T-cell (primary cell): ENCODE measurements at regions of chr17 and their contacts with region 1.

Region 1: DNA sequence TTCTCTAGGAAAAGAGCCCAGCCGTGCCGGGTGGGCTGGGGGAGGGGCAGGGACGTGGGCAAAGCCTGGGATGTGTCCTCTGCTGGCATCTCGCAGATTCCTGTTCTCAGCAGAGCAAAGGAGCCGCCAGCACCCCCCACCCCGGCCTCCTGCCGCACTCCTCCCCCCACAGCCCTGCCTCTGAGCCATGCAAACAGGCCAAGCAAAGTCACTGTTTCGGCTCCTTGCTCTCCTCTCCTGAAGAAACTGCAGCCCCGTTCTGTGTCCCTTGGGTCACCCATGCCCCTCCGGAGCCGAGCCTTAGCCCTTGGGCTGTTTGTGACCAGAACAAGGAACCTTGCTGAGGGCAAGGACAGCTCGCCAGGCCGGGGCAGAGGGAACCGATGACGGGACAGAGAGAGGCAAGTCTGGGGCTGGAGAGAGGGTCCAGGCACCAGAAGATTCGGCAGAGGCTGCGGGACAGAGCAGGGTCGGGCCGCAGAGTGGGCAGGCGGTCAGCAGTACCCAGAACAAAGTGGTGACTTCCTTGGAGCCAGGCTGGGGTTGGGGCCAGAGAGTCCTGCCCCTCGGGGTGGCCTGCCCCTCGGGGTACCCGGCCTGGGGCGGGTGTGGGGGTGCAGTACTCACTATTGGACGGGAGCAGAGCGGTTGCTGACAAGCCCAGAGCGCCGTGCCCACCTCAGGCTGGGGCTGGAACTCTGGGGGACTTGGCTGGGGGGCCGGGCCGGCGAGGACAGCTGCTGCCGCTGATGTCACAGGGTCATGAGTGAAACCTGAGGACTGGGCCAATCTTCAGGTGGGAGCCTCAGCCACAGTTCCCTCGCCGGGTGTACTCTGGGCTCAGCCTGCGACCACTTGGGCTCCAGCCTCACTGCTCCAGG is 9.2 kb upstream of the PRR29 start:
- DNase-seq: no peak
- ATAC-seq: no peak
- H3K4me3 ChIP-seq: no peak overlapping the region
- H3K4me3 Mint-ChIP-seq: no peak overlapping the region
- H3K27ac ChIP-seq: no peak overlapping the region
- H3K27ac Mint-ChIP-seq: peak overlapping the region in 1 of 2 donors; percentile 57
- H3K4me1 ChIP-seq: peaks cover 2 to 64% of the 10 kb centered on the region in 2 experiments
- H3K4me1 Mint-ChIP-seq: peaks cover 44 to 63% (median 48%) of the 10 kb centered on the region in 3 donors
- H3K27me3 ChIP-seq: peaks cover 0 to 7% of the 10 kb centered on the region in 2 experiments
- H3K27me3 Mint-ChIP-seq: no peaks in the 10 kb centered on the region

Region 2: GRCh38 chr17:63919311-63919723 is 69.7 kb before region 1 on chr17:
- CTCF ChIA-PET with region 1: interaction called in 1 of 2 experiments, 13 read pairs
- POLR2A ChIA-PET with region 1: interaction called in 1 of 2 experiments, 6 read pairs
- DNase-seq: peak; percentile 37 to 89 (median 61)
- ATAC-seq: peak; percentile 91 to 99 (median 94)
- H3K4me3 ChIP-seq: no peak overlapping the region
- H3K4me3 Mint-ChIP-seq: no peak overlapping the region
- H3K27ac ChIP-seq: no peak overlapping the region
- H3K27ac Mint-ChIP-seq: peak overlapping the region; percentile 5 to 69
- H3K4me1 ChIP-seq: peaks cover 0 to 10% of the 10 kb centered on the region in 2 experiments
- H3K4me1 Mint-ChIP-seq: peaks cover 8 to 13% (median 9%) of the 10 kb centered on the region in 3 donors
- H3K27me3 ChIP-seq: peaks cover 0 to 7% of the 10 kb centered on the region in 2 experiments
- H3K27me3 Mint-ChIP-seq: peaks cover 3 to 4% of the 10 kb centered on the region in 2 donors

Region 3: DNA sequence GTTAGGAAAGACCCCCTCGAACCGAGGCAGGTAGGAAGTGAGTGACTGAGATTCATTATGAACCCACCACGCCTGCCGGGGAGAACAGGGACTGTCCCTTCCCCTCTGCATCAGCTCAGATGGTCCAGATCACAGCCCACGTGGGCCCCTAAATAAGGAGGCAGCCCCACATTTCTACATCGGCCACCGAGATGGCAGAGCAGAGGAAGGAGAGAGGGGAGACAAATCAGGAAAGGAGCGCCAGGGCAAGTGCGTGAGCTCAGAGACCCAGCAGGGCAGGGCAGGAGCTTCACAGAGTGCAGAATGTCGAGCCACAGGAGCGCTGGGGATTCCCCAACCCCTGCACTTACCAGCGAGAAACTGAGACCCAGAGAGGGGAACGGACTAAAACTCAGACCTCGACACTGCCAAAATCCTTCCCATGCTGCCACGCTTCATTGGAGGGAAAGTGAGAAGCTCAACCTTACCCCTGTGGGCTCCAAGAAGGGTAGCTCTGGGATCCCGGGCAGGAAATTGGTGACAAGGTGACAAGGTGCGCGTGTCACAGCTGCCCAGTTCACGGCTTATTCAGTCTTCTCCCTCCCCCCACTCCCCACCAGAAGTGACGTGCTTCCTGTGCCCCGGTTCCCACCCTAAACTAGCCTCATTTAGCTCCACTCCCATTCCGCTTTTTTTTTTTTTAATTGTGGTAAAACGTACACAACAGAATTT is 31.2 kb after region 1 on chr17 and contains the start of gene ICAM2:
- CTCF ChIA-PET with region 1: interaction called in 1 of 2 experiments, 13 read pairs
- POLR2A ChIA-PET with region 1: interaction called in 1 of 2 experiments, 14 read pairs
- DNase-seq: peak; percentile 71 to 97 (median 94)
- ATAC-seq: peak; percentile 79 to 86 (median 85)
- H3K4me3 ChIP-seq: peak within 1 kb of the TSS; percentile 92 to 96
- H3K4me3 Mint-ChIP-seq: peak within 1 kb of the TSS; percentile 93 to 100 (median 97)
- H3K27ac ChIP-seq: peak within 1 kb of the TSS; percentile 100
- H3K27ac Mint-ChIP-seq: peak within 1 kb of the TSS; percentile 96 to 100
- H3K4me1 ChIP-seq: peaks cover 50 to 71% of the 10 kb centered on the region in 2 experiments
- H3K4me1 Mint-ChIP-seq: peaks cover 71 to 83% (median 72%) of the 10 kb centered on the region in 3 donors
- H3K27me3 ChIP-seq: no peaks in the 10 kb centered on the region
- H3K27me3 Mint-ChIP-seq: no peaks in the 10 kb centered on the region
- total RNA-seq, gene ICAM2: 69.6 to 132 (median 116) TPM

Region 4: GRCh38 chr17:64155751-64156544 is 167.0 kb after region 1 on chr17:
- CTCF ChIA-PET with region 1: no interaction called
- POLR2A ChIA-PET with region 1: no interaction called
- DNase-seq: no peak
- ATAC-seq: no peak
- H3K4me3 ChIP-seq: no peak overlapping the region
- H3K4me3 Mint-ChIP-seq: no peak overlapping the region
- H3K27ac ChIP-seq: no peak overlapping the region
- H3K27ac Mint-ChIP-seq: no peak overlapping the region
- H3K4me1 ChIP-seq: no peaks in the 10 kb centered on the region
- H3K4me1 Mint-ChIP-seq: no peaks in the 10 kb centered on the region
- H3K27me3 ChIP-seq: no peaks in the 10 kb centered on the region
- H3K27me3 Mint-ChIP-seq: no peaks in the 10 kb centered on the region

Region 5: GRCh38 chr17:64582879-64583632 is 594.1 kb after region 1 on chr17:
- CTCF ChIA-PET with region 1: no interaction called
- POLR2A ChIA-PET with region 1: interaction called in 1 of 2 experiments, 12 read pairs
- DNase-seq: no peak
- ATAC-seq: no peak
- H3K4me3 ChIP-seq: no peak overlapping the region
- H3K4me3 Mint-ChIP-seq: no peak overlapping the region
- H3K27ac ChIP-seq: no peak overlapping the region
- H3K27ac Mint-ChIP-seq: no peak overlapping the region
- H3K4me1 ChIP-seq: no peaks in the 10 kb centered on the region
- H3K4me1 Mint-ChIP-seq: peaks cover 0 to 13% (median 10%) of the 10 kb centered on the region in 3 donors
- H3K27me3 ChIP-seq: no peaks in the 10 kb centered on the region
- H3K27me3 Mint-ChIP-seq: no peaks in the 10 kb centered on the region